Activated T-helper 1 cell treated with anti-CD3 and anti-CD28 coated beads, Interleukin-12 subunit alpha, Interleukin-12 subunit beta, Interleukin-2, Interleukin-4 antibody, amounts not matched to agents 30 ng/mL and 10 ng/mL and 1 ng/mL, durations not matched to agents 14 hours and 24 hours and 36 hours (primary cell): ENCODE measurements at regions of chr22 and their contacts with region 1.

Region 1: DNA sequence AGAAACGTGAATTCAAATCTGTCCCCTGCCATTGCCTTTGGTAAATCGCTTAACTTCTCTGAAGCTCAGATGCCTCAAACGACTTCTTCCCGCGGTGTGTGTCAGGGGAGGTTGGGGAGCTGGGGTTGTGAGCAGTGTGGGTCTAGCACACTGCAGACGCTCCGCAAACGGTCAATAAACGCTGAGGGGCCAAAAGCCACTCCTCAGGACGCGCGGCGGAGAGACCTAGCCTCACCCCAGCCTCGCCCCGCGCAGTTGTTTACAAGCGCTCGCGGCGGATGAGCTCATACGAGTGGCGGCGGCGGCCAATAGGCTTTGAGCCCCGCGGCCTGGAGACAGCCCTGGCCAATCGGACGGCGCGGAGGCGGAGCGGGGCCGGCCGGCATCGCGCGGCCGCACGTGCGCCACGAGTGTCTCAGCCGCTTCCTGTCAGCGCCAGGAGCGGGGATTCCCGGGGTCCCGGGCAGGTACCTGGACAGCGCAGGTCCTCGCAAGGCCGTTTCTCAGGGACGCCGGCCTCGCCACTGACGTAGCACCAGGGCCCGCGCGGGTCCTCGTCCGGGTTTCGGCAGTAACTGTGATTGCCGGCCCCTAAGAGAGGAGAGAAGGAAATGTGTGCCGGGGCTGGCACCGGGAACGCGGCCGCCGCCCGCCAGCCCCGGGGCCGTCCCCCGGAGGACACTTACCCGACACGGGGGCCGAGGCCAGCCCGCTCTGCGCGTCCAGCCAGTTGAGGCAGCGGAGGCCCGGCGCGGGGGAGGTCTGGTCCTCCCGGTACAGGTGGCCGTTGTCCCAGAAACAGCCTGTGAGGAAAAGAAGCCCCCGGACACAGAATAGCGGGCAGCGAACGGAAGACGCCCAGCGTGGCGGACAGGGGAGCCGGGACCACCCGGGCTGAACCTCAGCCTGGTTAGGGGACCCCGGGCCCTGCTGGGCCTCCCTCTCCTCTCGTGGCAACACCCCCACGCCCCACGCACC is 1.5 kb downstream of the PIK3IP1 start:
- DNase-seq: peak; percentile 93
- H3K4me3 Mint-ChIP-seq: peak overlapping the region; percentile 96
- H3K27ac Mint-ChIP-seq: peak overlapping the region; percentile 99
- H3K4me1 Mint-ChIP-seq: peaks cover 77% of the 10 kb centered on the region
- H3K27me3 Mint-ChIP-seq: no peaks in the 10 kb centered on the region

Region 2: DNA sequence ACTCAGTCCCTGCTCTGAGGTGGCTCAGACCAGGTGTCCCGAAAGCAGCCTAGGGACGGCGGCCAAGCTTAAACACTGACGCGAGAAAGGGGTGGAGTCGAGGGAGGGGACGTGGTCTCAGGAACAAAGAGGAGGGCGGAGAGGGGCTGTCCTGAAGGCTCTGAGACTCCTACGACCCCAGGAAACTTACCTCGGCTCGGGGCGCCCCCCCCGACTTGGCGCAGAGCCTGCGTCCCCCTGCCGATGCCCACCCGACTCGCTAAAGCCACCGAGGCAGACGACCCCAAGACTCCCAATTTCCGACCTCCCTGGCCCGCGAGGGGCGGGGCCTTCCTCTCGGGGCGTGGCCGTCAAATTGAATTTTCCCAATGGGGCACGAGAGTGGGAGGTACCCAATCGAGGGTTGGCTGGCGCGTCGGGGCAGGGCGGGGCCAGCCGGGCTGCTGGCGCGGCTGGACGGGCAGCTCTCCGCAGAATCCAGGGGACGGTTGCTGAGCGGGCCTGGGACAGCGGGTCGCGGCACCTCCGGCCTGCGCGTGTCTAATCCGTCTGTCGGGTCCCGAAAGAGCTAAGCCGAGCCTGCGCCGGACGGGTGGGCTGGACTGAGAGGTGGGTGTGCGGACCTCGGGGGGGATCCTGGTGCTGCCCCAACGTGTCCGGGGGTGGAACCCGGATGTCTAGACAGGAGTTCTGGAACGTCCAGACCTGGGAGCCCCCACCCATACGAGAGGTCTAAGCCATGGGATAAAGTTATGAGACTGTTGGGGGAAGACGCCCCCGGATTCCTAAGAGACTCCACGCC is 209.7 kb before region 1 on chr22 and contains the start of gene SMTN:
- intact Hi-C with region 1: loop called (anchors 2 kb)
- DNase-seq: peak; percentile 84
- H3K4me3 Mint-ChIP-seq: peak within 1 kb of the TSS; percentile 92
- H3K27ac Mint-ChIP-seq: peak within 1 kb of the TSS; percentile 29
- H3K4me1 Mint-ChIP-seq: peaks cover 40% of the 10 kb centered on the region
- H3K27me3 Mint-ChIP-seq: no peaks in the 10 kb centered on the region
- total RNA-seq, gene SMTN: 10.2 and 13.7 TPM in 2 replicates

Region 3: DNA sequence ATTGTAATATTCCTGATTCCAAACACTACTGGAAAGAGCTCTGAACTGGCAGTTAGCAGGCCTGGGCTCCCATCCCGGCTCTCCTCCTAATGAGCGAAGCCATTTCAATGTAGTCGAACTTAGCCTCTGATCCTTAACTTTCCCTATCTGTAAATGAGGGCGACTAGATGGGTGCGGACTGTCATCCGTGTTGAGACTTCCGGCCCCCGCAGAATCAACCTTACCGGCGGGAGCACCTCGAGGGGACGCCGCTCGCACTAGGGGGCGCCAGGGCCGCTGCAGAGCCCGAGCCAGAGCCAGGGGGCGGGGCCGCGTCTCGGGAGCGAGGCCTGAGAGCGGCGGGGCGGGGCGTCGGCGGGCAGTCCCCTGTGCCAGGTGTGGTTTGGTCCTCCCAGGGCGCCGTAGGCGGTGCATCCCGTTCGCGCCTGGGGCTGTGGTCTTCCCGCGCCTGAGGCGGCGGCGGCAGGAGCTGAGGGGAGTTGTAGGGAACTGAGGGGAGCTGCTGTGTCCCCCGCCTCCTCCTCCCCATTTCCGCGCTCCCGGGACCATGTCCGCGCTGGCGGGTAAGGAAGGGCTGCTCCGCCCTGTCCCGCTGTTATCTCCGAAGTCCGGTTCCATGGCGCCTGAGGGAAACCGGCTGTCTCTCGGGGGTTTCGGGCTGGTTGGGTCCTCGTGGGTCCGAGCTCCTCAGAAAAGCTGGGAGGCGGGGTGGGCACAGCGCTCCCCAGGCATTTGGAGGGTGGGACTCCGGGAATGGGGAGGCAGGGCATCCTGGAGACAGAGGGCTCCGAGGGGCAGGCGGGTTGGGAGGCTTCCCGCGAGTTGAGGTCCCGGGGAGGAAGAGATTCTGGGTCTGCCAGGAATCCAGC is 78.7 kb before region 1 on chr22 and contains the start of gene LIMK2:
- intact Hi-C with region 1: loop called (anchors 1 kb)
- DNase-seq: peak; percentile 95
- H3K4me3 Mint-ChIP-seq: peak within 1 kb of the TSS; percentile 89
- H3K27ac Mint-ChIP-seq: peak within 1 kb of the TSS; percentile 83
- H3K4me1 Mint-ChIP-seq: peaks cover 54% of the 10 kb centered on the region
- H3K27me3 Mint-ChIP-seq: no peaks in the 10 kb centered on the region
- total RNA-seq, gene LIMK2: 39.8 and 40.7 TPM in 2 replicates

Region 4: GRCh38 chr22:31329006-31329405 is 38.2 kb after region 1 on chr22:
- intact Hi-C with region 1: loop called (anchors 1 kb)
- DNase-seq: no peak
- H3K4me3 Mint-ChIP-seq: no peak overlapping the region
- H3K27ac Mint-ChIP-seq: no peak overlapping the region
- H3K4me1 Mint-ChIP-seq: peaks cover 23% of the 10 kb centered on the region
- H3K27me3 Mint-ChIP-seq: no peaks in the 10 kb centered on the region

Region 5: GRCh38 chr22:31537019-31537535 is 246.3 kb after region 1 on chr22:
- intact Hi-C with region 1: loop called (anchors 5 kb)
- DNase-seq: peak; percentile 64
- H3K4me3 Mint-ChIP-seq: peak overlapping the region; percentile 80
- H3K27ac Mint-ChIP-seq: peak overlapping the region; percentile 97
- H3K4me1 Mint-ChIP-seq: peaks cover 69% of the 10 kb centered on the region
- H3K27me3 Mint-ChIP-seq: no peaks in the 10 kb centered on the region